BJ (cell line): ENCODE measurements at regions of chr10 and their contacts with region 1.

Region 1: DNA sequence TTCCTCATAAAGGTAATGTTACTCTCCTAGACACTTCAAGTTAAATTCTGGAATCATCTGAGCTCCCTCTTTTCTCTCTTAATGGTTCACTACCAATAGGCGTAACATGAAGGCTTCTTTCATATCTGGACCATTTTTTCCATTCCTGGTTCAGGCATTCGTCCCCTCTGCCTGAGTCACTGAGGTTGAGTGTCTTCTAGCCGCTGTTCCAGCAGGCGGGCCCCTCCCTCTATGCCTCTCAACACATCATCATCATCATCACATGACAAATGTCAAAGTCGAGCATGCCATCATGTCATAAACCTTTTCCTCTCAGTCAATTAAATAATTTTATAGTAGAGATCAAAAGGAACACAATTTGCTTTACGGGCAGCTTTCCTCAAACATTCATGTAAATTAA is 168.9 kb upstream of the ASAH2 start:
- DNase-seq: no peak
- H3K4me3 ChIP-seq: no peak overlapping the region
- H3K27me3 ChIP-seq: no peaks in the 10 kb centered on the region
- CTCF ChIP-seq: no peak

Region 2: DNA sequence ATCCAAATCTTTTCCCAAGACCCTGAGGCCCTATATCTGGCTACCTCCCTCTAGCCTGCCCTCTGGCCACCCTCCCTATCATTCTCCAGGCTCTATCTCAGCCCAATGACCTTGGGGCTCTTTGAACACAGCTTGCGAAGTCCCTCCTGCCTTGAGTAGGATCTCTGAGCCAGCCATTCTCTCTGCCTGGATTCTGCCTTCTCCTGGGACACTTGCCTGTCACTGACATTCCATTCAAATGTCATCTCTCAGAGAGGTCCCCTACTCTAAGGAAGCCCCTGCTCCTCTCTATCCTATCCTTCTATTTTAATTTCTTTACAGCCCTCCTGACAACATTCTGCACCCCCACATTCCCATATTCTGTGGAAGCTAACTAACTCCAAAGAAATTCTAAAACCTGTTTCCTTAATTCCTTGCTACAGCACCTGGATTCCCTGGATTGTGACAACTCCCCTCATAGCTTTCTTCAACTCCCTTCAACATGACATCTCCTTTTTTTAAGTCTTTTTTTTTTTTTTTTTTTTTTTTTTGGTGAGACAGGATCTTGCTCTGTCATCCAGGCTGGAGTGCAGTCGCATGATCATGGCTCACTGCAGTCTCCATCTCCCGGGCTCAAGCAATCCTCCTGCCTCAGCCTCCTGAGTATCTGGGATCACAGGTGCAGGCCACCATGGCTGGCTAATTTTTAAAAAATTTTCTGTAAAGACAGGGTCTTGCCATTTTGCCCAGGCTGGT is 87.9 kb before region 1 on chr10:
- CTCF ChIA-PET with region 1: no interaction called
- POLR2A ChIA-PET with region 1: interaction called, 16 read pairs
- DNase-seq: no peak
- H3K4me3 ChIP-seq: no peak overlapping the region
- H3K27me3 ChIP-seq: no peaks in the 10 kb centered on the region
- CTCF ChIP-seq: no peak